ENCODE measurements at regions of chr10 and their contacts with region 1.

Region 1: GRCh38 chr10:52740913-52741675 is 31.5 kb downstream of the MBL2 start:
- DNase-seq: no peak
- H3K4me3 ChIP-seq: no peak overlapping the region
- H3K27ac ChIP-seq: no peak overlapping the region
- H3K4me1 ChIP-seq: no peaks in the 10 kb centered on the region
- H3K27me3 ChIP-seq: no peaks in the 10 kb centered on the region
- CTCF ChIP-seq: peak; percentile 54 to 90 (median 80)
- POLR2A ChIP-seq: no peak

Region 2: DNA sequence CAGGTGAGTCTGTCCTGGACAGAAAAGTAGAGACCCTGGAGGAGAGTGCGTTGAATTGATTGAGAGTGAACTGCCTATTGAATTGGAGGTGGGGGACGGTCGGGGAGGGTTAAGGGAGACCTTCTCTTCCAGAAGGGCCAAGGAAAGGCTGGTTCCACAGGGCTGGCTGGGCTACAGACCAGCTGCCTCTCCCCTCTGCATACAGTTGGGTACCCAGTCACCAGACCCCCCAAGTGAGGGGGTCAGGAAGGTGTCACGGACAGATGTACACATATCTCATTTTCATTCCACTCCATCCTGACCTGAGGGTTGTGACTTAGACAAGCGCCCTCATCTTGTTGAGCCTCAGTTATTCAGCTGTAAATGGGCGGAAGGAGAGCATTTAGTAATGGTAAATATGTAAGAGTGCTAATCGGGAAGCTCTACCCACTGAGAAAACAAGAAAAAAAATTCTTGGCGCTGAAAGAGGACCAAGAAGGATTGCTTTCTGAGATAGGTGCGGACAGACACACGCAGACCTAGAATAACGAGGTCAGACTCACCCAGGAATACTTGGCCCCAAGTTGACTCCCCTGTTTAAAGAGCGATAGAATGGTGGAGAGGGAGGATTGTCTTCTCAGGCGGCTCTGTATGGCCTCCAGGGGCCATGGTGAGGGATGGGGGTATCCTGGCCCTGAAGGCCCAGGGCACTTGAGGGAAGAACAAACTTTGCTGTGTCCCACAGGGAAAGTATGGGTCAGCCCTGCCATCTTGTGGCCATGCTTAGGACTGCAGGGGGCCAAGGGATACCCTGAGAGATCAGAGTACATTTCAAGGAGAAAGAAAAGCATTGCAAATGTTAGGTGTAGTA is 38.7 kb after region 1 on chr10:
- intact Hi-C with region 1: loop called (anchors 5 kb)
- DNase-seq: no peak
- H3K4me3 ChIP-seq: no peak overlapping the region
- H3K27ac ChIP-seq: no peak overlapping the region
- H3K4me1 ChIP-seq: no peaks in the 10 kb centered on the region
- H3K27me3 ChIP-seq: peaks cover 0 to 23% (median 11%) of the 10 kb centered on the region in 7 donors
- CTCF ChIP-seq: peak; percentile 62 to 88 (median 80)
- POLR2A ChIP-seq: no peak